ENCODE measurements at regions of chr5 and their contacts with region 1.

Region 1: DNA sequence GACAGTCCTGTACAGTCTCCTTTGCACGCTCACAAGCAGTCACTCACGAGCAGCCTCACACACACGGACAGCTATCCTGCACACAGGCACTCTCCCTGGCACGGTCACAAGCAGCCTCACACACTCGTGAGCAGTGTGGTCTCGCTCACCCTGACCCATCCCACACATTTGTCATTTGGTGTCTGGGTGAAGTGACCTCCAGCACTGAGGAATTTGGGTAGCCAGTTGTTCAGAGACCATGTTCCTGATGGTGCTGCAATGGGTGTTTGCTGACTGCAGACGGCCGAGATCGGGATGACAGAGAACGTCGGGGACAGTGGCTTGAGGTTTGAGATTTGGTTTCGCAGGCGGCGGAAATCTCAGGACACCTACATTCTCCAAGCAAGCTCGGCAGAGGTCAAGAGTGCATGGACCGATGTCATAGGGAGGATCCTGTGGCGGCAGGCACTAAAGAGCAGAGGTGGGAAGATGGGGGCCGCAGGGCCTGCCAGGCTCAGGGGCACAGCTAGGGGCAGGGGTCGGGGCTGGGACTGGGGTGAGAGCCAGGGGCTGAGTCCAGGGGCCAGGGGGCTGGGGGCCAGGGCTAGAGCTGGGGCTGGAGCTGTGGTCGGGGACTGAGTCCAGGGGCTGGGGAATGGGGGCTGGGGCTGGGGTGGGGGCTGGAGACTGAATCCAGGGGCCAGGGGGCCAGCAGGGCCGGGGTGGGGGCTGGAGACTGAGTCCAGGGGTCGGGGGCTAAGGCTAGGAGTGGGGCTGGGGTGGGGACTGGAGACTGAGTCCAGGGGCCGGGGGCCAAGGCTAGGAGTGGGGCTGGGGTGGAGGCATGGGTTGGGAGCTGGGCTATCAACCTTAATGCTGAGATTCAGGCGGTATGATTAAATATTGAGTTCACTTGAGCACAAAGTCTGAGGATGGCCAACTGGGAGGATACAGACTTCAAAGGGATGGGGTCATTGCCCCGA is 17.4 kb upstream of the LRRC14B start:
- DNase-seq: no peak
- ATAC-seq: no peak
- H3K4me3 ChIP-seq: no peak overlapping the region
- H3K27ac ChIP-seq: no peak overlapping the region
- H3K4me1 ChIP-seq: no peaks in the 10 kb centered on the region
- H3K27me3 ChIP-seq: peaks cover 2% of the 10 kb centered on the region; the same call in 1 of the 2 replicates
- CTCF ChIP-seq: no peak

Region 2: DNA sequence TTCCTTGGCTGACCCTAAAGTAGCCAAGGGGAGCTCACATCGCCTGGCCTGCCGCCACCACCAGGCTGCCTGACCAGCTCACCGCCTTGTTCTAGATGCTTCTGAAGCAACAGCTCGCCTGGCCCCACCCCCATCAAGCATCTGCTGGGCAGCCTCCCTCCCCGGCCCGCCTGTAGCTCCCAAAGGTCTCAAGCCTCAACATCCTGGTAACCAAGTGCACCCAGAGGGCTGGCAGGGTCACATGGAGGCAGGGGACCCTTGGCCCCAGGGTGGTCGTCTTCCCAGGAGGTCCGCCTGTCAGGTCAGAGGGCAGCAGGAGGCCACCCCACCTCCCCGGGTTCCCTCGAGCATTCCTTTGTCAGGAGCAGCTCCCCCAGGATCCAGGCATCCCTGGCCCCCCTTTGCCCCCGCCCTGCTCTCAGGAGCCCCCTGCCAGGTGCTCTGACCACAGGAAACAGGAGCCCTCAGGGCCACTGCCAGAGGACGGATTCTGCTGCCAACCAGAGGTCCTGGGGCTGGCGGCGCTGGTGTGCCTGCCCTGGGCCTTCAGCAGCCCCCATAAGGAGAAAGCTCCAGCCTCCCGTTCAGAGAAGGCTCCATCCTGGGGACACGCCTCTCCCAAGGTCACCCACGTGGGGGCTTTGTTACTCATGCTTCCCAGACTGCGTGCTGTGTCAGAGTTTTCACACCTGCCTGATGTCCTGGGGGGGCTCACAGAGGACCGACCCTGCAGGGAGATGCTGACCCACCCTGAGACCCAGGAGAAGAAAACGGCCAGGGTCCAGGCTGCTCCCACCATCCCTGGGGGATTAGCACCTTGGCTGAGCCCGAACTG is 13.9 kb after region 1 on chr5:
- CTCF ChIA-PET with region 1: interaction called, 18 read pairs
- POLR2A ChIA-PET with region 1: no interaction called
- in situ Hi-C with region 1: no loop called
- intact Hi-C with region 1: no loop called
- DNase-seq: no peak
- ATAC-seq: no peak
- H3K4me3 ChIP-seq: peak overlapping the region in 1 of 2 experiments; percentile 46; a peak in 2 of 4 replicates
- H3K27ac ChIP-seq: peak overlapping the region; percentile 69
- H3K4me1 ChIP-seq: peaks cover 47% of the 10 kb centered on the region
- H3K27me3 ChIP-seq: no peaks in the 10 kb centered on the region
- CTCF ChIP-seq: no peak

Region 3: DNA sequence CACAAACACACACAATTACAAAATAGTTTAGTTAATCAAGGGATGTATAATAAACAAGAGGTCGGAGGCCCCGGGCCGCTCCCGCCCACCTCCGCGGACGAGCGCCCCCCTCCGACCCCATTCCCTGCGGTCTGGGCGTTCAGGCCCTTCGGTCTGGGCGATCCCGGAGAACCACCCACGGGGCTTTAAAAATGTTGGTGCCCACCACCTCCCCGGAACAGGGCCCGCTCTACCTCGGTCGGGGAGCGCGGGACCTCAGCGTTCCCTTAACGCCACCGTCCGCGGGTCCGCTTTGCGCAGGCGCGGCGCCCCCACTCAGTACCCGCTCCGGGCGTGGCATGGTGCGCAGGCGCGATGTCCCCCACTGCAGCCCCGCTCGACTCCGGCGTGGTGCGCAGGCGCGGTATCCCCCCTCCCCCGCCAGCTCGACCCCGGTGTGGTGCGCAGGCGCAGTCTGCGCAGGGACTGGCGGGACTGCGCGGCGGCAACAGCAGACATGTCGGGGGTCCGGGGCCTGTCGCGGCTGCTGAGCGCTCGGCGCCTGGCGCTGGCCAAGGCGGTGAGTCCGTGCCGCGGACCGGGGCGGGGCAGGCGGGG is 44.0 kb after region 1 on chr5 and contains the starts of genes CCDC127 and SDHA:
- CTCF ChIA-PET with region 1: no interaction called
- POLR2A ChIA-PET with region 1: no interaction called
- in situ Hi-C with region 1: no loop called
- intact Hi-C with region 1: no loop called
- DNase-seq: peak; percentile 71
- ATAC-seq: peak; percentile 94
- H3K4me3 ChIP-seq: peak within 1 kb of the TSS; percentile 77 to 87
- H3K27ac ChIP-seq: peak within 1 kb of the TSS; percentile 90
- H3K4me1 ChIP-seq: peaks cover 13% of the 10 kb centered on the region
- H3K27me3 ChIP-seq: no peaks in the 10 kb centered on the region
- CTCF ChIP-seq: peak; percentile 85
- total RNA-seq, gene CCDC127: 8.1 TPM
- total RNA-seq, gene SDHA: 171 TPM

Measured in Panc1 (cell line).